K562 (cell line): ENCODE measurements at regions of chr1 and their contacts with region 1.

Region 1: DNA sequence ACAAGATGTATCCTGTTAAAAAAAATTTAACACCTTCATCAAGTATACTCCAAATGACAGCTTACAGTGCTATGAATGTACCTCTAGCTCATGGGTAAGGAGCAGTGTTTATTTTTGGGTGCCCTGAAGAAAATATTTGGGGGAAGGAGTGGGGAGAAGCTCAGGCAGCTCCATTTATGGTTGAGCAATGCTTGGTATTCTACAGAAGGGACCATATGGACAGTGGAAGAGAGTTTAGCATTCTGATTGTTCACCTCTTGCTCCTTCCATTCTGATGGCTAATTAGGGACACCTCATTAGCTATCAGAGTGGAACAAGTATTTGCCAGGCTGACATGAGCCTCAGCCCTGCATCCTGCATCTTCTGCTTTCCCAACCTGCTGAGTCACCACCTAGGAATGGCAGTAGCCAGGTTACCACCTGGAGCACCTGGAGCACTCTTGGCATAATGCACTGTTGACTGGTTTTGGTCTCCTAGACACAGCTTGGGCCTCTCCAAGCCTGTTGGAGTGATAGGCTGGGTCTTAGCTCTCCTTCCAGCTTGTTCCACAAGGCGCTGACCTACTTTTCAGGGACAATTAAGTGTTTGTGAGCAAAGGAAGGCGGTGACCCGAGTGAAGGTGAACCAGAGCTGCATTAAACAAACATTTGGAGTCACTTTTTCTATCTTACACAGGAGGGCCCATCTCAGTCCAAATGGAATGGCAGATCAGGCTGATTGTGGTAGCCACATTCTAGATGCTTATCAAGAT is 61.9 kb upstream of the MACF1 start:
- DNase-seq: no peak
- ATAC-seq: no peak
- H3K4me3 ChIP-seq: no peak overlapping the region
- H3K27ac ChIP-seq: no peak overlapping the region
- H3K4me1 ChIP-seq: no peaks in the 10 kb centered on the region; a peak in 2 of 5 replicates
- H3K27me3 ChIP-seq: no peaks in the 10 kb centered on the region
- CTCF ChIP-seq: no peak
- EP300 ChIP-seq: no peak
- POLR2A ChIP-seq: no peak
- RAD21 ChIP-seq: no peak

Region 2: GRCh38 chr1:39158327-39159086 is 15.9 kb after region 1 on chr1:
- CTCF ChIA-PET with region 1: no interaction called
- POLR2A ChIA-PET with region 1: interaction called, 27 read pairs
- in situ Hi-C with region 1: no loop called
- intact Hi-C with region 1: no loop called
- DNase-seq: peak; percentile 51 to 93 (median 66)
- ATAC-seq: peak; percentile 91
- H3K4me3 ChIP-seq: peak overlapping the region; percentile 47
- H3K27ac ChIP-seq: peak overlapping the region; percentile 82
- H3K4me1 ChIP-seq: peaks cover 9 to 35% of the 10 kb centered on the region in 2 experiments; a peak in 4 of 5 replicates
- H3K27me3 ChIP-seq: no peaks in the 10 kb centered on the region
- CTCF ChIP-seq: no peak
- EP300 ChIP-seq: peak; percentile 14; the same call in 1 of the 2 replicates
- POLR2A ChIP-seq: peak; percentile 80
- RAD21 ChIP-seq: 0 out of 4 replicates have a peak, but pooled peaks of 1 of the 2 experiments have one; percentile 6

Region 3: DNA sequence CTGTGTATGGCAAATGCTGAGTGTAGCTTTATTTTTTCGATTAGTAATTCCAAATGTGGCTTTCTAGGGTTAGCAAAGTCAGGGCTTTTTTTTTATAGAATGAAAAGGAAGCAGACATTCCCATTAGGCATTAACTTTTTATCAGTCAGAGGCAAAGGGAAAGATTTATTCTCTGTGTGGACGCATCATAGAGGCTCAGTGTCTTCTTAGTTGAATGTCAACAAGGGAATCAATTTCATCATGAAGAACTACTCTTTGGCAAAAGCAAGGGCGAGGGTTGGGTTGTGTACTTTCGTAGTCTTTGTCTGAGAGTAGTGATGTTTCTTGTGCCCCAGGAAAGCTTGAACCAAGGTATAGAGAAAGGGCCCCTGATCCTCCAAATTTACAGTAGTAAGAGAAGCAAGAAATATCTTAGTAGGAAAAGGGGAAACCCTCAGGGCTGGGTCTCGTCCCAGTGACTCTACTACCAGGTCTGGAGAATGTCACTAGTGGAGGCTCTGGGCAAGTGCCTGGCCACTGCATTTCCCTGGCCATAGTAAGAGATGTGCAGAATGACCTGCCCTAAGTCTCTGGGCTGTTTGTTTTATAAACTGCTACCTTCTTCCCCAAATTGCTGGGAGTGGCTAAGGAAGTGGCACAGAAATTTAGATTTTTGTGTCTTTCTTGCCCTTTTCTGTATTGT is 32.0 kb after region 1 on chr1:
- CTCF ChIA-PET with region 1: no interaction called
- POLR2A ChIA-PET with region 1: no interaction called
- in situ Hi-C with region 1: no loop called
- intact Hi-C with region 1: no loop called
- DNase-seq: no peak
- ATAC-seq: 0 out of 3 replicates have a peak, but pooled peaks have one; percentile 23
- H3K4me3 ChIP-seq: no peak overlapping the region
- H3K27ac ChIP-seq: no peak overlapping the region
- H3K4me1 ChIP-seq: peaks cover 23 to 49% of the 10 kb centered on the region in 2 experiments
- H3K27me3 ChIP-seq: no peaks in the 10 kb centered on the region
- CTCF ChIP-seq: no peak
- EP300 ChIP-seq: no peak
- POLR2A ChIP-seq: no peak
- RAD21 ChIP-seq: no peak